K562 (cell line): ENCODE measurements at regions of chr1 and their contacts with region 1.

Region 1: DNA sequence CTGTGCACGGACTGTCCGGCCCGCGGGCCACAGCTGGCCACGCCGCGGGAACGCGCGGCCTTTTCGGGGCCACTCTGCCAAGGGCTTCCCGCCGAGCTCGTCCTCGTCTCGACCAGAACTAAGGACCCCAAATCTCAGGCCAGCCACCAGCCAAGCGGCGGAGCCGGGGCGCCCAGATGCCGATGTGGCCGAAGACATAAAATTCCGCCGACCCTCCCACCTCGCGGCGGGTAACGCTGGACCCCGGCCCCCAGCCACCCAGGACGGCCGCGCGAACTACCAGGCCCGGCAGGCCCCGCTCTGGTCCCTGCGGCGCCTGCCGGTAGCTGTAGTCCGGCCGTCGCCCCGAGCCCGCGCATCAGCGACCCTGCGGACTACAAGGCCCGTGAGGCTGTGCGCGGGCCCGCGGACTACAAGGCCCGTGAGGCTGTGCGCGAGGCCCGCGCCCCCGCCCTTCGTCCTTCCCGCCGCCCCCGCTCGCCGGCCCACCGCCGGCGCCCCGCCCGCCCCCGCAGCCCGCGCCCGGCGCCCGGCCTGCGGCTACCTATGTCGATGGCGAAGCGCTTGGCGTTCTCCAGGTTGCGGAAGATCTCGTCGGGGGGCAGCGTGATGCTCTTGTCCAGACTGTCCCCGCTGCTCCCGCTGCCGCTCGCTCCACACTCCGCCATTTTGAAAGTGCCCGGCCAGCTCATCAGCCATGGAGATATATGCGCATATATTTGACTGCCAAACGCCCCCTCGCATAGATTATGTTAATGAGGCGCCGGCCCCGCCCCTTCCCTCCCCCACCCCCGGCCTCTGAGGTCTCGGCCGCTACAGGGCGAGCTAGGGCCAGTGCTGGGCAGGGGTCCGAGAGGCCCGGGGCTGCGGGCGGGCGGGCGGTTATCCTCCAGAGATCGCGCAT is at the start of gene PANK4:
- DNase-seq: peak; percentile 89 to 97 (median 93)
- ATAC-seq: peak; percentile 95
- H3K4me3 ChIP-seq: peak within 1 kb of the TSS; percentile 99
- H3K27ac ChIP-seq: peak within 1 kb of the TSS; percentile 84
- H3K4me1 ChIP-seq: peaks cover 24 to 82% of the 10 kb centered on the region in 2 experiments; a peak in 4 of 5 replicates
- H3K27me3 ChIP-seq: peaks cover 19 to 21% of the 10 kb centered on the region in 2 experiments; a peak in 4 of 5 replicates
- CTCF ChIP-seq: no peak
- EP300 ChIP-seq: no peak
- POLR2A ChIP-seq: peak; percentile 85
- RAD21 ChIP-seq: no peak
- polyA plus RNA-seq, gene PANK4: 0.93 to 1.4 TPM

Region 2: GRCh38 chr1:2085080-2085479 is 441.1 kb before region 1 on chr1:
- CTCF ChIA-PET with region 1: no interaction called
- POLR2A ChIA-PET with region 1: no interaction called
- in situ Hi-C with region 1: no loop called
- intact Hi-C with region 1: no loop called
- DNase-seq: no peak
- ATAC-seq: no peak
- H3K4me3 ChIP-seq: no peak overlapping the region
- H3K27ac ChIP-seq: no peak overlapping the region
- H3K4me1 ChIP-seq: peaks cover 0 to 17% of the 10 kb centered on the region in 2 experiments; a peak in 2 of 5 replicates
- H3K27me3 ChIP-seq: peaks cover 71 to 97% of the 10 kb centered on the region in 2 experiments
- CTCF ChIP-seq: no peak
- EP300 ChIP-seq: no peak
- POLR2A ChIP-seq: no peak
- RAD21 ChIP-seq: no peak

Region 3: DNA sequence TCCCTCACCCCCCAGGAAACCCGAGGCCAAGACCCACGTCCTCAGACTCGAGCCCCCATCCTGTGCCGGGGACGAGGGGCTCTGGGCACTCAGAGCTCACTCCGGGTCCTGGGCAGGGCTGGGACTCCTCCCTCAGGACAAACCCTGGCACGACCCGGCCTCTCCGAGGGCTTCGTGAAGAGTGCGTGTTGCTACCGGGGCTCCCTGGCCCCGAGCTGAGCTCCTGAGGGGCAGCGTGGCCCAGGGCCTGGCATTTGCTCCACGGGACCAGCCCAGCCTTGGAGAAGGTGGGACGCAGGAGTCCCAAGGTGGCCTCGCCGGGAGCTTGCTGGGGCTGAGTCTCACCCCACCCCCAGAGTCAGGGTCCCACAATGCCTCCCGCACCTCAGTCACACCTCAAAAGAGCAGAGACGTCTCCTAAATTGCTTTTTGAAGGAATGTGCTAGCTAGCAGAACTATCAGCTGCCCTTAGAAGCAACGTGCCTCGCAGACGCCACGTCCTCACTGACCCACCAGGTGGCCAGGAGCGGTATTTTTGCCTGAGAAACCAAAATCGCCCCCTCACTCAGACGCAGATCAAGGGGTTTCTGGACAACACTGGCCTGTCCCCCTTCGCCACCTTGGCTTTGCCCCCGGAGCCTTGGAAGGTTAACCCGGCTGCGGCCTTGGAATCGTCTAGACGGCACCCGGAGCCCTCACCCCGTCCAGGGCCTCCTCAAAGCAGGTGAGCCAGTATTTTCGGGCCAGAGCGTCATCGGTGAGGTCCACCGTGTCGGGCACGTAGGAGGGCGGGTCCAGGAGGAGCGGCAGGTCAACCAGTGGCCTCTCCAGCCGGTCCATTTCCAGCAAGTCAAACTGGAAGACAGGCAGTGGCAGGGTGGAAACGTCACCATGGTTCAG is 11.1 kb before region 1 on chr1:
- CTCF ChIA-PET with region 1: no interaction called
- POLR2A ChIA-PET with region 1: interaction called, 11 read pairs
- in situ Hi-C with region 1: no loop called
- intact Hi-C with region 1: no loop called
- DNase-seq: no peak
- ATAC-seq: peak; percentile 17; the same call in 1 of the 3 replicates
- H3K4me3 ChIP-seq: no peak overlapping the region
- H3K27ac ChIP-seq: no peak overlapping the region
- H3K4me1 ChIP-seq: peaks cover 0 to 29% of the 10 kb centered on the region in 2 experiments; a peak in 1 of 5 replicates
- H3K27me3 ChIP-seq: no peaks in the 10 kb centered on the region
- CTCF ChIP-seq: peak in 2 of 3 experiments; percentile 24 to 32; a peak in 2 of 6 replicates
- EP300 ChIP-seq: no peak
- POLR2A ChIP-seq: 0 out of 2 replicates have a peak, but pooled peaks have one; percentile 11
- RAD21 ChIP-seq: no peak

Region 4: GRCh38 chr1:3000671-3001470 is 474.7 kb after region 1 on chr1:
- CTCF ChIA-PET with region 1: no interaction called
- POLR2A ChIA-PET with region 1: no interaction called
- in situ Hi-C with region 1: no loop called
- intact Hi-C with region 1: no loop called
- DNase-seq: no peak
- ATAC-seq: no peak
- H3K4me3 ChIP-seq: no peak overlapping the region
- H3K27ac ChIP-seq: no peak overlapping the region
- H3K4me1 ChIP-seq: no peaks in the 10 kb centered on the region; a peak in 1 of 5 replicates
- H3K27me3 ChIP-seq: peaks cover 0 to 14% of the 10 kb centered on the region in 2 experiments; a peak in 3 of 5 replicates
- CTCF ChIP-seq: no peak
- EP300 ChIP-seq: no peak
- POLR2A ChIP-seq: no peak
- RAD21 ChIP-seq: no peak